WTC11 (cell line): ENCODE measurements at regions of chr1 and their contacts with region 1.

Region 1: GRCh38 chr1:21270086-21270689 is 20.1 kb downstream of the ECE1 start:
- DNase-seq: peak; percentile 96
- ATAC-seq: peak; percentile 96
- H3K4me3 Mint-ChIP-seq: no peak overlapping the region
- H3K27ac Mint-ChIP-seq: no peak overlapping the region
- H3K4me1 Mint-ChIP-seq: peaks cover 2% of the 10 kb centered on the region; the same call in 1 of the 2 replicates
- H3K27me3 Mint-ChIP-seq: no peaks in the 10 kb centered on the region
- CTCF ChIP-seq: peak; percentile 96

Region 2: GRCh38 chr1:21238141-21238800 is 31.9 kb before region 1 on chr1:
- CTCF ChIA-PET with region 1: interaction called, 69 read pairs
- POLR2A ChIA-PET with region 1: no interaction called
- DNase-seq: no peak
- ATAC-seq: no peak
- H3K4me3 Mint-ChIP-seq: no peak overlapping the region
- H3K27ac Mint-ChIP-seq: 0 out of 2 replicates have a peak overlapping the region, but pooled peaks have one; percentile 36
- H3K4me1 Mint-ChIP-seq: peaks cover 14% of the 10 kb centered on the region
- H3K27me3 Mint-ChIP-seq: no peaks in the 10 kb centered on the region
- CTCF ChIP-seq: no peak

Region 3: DNA sequence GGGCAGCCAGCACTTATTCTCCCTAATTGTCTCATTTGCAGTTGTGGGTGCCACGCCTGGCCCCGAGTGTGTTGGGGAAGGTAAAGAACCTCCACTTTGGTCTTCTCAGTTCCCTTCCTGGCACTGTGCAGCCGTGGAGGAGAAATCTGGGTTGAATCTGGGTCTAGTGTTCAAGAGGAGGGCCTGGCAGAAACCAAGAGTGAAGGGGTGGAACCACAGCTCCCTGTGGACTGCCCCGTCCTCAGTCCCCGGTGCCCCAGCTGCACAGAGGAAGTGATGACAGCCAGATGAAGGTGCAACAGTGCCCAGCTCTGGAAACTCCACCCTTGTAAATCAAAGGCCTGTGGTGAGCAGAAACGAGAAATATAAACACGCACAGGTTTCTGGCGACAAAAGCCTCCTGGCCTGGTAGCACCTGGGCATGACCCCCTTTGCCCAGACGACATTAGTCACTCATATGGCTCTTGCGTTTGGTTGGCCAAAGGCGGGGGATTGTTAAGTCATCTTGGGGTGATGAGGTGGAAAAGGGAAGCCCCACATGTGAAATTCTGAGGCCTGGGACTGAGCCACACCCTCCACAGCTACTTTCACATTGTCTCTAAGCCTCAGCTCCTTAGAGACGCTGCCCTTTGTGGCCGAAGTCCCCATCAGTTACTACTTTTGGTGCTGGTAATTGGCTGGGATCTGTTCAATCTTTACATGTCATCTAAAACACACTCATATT is 24.2 kb after region 1 on chr1:
- CTCF ChIA-PET with region 1: interaction called, 125 read pairs
- POLR2A ChIA-PET with region 1: no interaction called
- DNase-seq: no peak
- ATAC-seq: no peak
- H3K4me3 Mint-ChIP-seq: no peak overlapping the region
- H3K27ac Mint-ChIP-seq: no peak overlapping the region
- H3K4me1 Mint-ChIP-seq: peaks cover 33% of the 10 kb centered on the region
- H3K27me3 Mint-ChIP-seq: no peaks in the 10 kb centered on the region
- CTCF ChIP-seq: no peak

Region 4: GRCh38 chr1:21324368-21325141 is 54.4 kb after region 1 on chr1:
- CTCF ChIA-PET with region 1: interaction called, 178 read pairs
- POLR2A ChIA-PET with region 1: no interaction called
- DNase-seq: no peak
- ATAC-seq: no peak
- H3K4me3 Mint-ChIP-seq: no peak overlapping the region
- H3K27ac Mint-ChIP-seq: peak overlapping the region; percentile 79
- H3K4me1 Mint-ChIP-seq: peaks cover 95% of the 10 kb centered on the region
- H3K27me3 Mint-ChIP-seq: no peaks in the 10 kb centered on the region
- CTCF ChIP-seq: no peak

Region 5: GRCh38 chr1:21350187-21350885 is 80.1 kb after region 1 on chr1:
- CTCF ChIA-PET with region 1: interaction called, 44 read pairs
- POLR2A ChIA-PET with region 1: no interaction called
- DNase-seq: no peak
- ATAC-seq: no peak
- H3K4me3 Mint-ChIP-seq: no peak overlapping the region
- H3K27ac Mint-ChIP-seq: no peak overlapping the region
- H3K4me1 Mint-ChIP-seq: no peaks in the 10 kb centered on the region
- H3K27me3 Mint-ChIP-seq: no peaks in the 10 kb centered on the region
- CTCF ChIP-seq: no peak